ENCODE measurements at regions of chr16 and their contacts with region 1.

Region 1: DNA sequence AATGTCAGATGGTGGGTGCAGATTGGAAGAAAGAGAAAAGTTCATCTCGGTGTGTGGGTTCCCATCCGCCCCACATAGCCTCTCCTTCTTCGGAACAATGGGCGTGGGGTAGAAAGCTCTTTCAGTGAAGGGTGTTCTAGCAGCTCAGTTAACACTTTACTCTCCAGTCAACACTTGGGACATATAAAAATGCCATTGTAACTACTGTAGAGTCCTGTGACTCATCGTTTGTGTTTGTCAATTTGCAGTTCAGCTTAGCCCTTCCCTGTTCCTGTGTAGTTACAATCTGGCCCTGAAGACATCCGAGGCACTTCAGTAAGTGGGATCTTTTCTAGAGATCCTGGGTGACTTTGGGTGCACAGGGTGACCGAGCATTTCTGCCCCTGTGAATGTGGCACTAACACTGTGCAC is 11.5 kb upstream of the CLEC18C start:
- DNase-seq: peak in 1 of 2 experiments; percentile 35
- H3K4me3 ChIP-seq: no peak overlapping the region
- H3K4me3 Mint-ChIP-seq: no peak overlapping the region
- H3K27ac Mint-ChIP-seq: no peak overlapping the region
- H3K4me1 ChIP-seq: 0 out of 2 replicates have a peak, but pooled peaks cover 12% of the 10 kb centered on the region
- H3K4me1 Mint-ChIP-seq: peaks cover 20% of the 10 kb centered on the region
- H3K27me3 ChIP-seq: no peaks in the 10 kb centered on the region
- H3K27me3 Mint-ChIP-seq: no peaks in the 10 kb centered on the region
- CTCF ChIP-seq: no peak

Region 2: DNA sequence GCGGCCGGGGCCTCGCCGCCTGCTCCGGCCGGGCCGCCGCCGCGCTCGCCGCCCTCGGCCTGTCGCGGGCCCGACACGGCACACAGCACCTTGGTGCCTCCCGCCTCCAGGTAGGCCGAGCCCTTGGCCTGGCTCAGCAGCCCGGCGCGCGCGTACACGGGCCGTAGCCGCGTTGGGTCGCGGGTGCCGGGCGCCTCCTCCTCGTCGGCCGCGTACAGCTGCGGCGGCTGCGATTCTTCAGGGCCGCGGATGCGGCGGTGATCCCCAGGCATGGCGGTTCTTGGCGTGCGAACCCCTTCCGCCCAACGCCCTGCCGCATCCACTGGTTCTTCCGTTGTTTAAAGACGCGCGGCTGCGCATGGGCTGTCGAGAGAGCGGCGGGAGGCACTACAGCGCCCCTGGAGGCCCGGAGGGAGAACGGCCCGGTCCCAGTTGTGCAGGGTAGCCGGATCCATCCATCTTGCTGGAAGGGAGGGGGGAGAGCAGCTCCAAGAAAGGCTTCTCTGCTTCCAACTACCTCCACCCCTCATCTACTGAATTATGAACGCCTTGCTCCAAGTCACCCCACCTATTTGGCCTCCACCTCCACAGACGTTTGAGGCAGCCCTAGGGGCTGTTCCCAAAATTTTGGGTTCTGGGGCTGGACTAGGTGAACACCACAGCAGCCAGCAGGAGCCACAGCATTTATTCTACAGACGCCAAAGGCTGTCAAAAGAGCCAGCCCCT is 89.7 kb after region 1 on chr16 and contains the start of gene EXOSC6:
- CTCF ChIA-PET with region 1: interaction called, 11 read pairs
- POLR2A ChIA-PET with region 1: no interaction called
- intact Hi-C with region 1: no loop called
- DNase-seq: peak; percentile 96 to 98
- H3K4me3 ChIP-seq: peak within 1 kb of the TSS; percentile 99
- H3K4me3 Mint-ChIP-seq: peak within 1 kb of the TSS; percentile 82
- H3K27ac Mint-ChIP-seq: peak within 1 kb of the TSS; percentile 89
- H3K4me1 ChIP-seq: no peaks in the 10 kb centered on the region
- H3K4me1 Mint-ChIP-seq: no peaks in the 10 kb centered on the region
- H3K27me3 ChIP-seq: no peaks in the 10 kb centered on the region
- H3K27me3 Mint-ChIP-seq: no peaks in the 10 kb centered on the region
- CTCF ChIP-seq: peak; percentile 97 to 98
- total RNA-seq, gene EXOSC6: 33.6 and 34.6 TPM in 2 replicates